Activated CD4-positive, alpha-beta memory T cell treated with anti-CD3 and anti-CD28 coated beads for 36 hours (primary cell): ENCODE measurements at regions of chr6 and their contacts with region 1.

Region 1: GRCh38 chr6:16836144-16836981 is 75.1 kb upstream of the ATXN1 start:
- DNase-seq: peak; percentile 25
- H3K4me3 Mint-ChIP-seq: peak overlapping the region; percentile 66
- H3K27ac Mint-ChIP-seq: peak overlapping the region; percentile 83
- H3K4me1 Mint-ChIP-seq: peaks cover 38% of the 10 kb centered on the region
- H3K27me3 Mint-ChIP-seq: peaks cover 4% of the 10 kb centered on the region

Region 2: DNA sequence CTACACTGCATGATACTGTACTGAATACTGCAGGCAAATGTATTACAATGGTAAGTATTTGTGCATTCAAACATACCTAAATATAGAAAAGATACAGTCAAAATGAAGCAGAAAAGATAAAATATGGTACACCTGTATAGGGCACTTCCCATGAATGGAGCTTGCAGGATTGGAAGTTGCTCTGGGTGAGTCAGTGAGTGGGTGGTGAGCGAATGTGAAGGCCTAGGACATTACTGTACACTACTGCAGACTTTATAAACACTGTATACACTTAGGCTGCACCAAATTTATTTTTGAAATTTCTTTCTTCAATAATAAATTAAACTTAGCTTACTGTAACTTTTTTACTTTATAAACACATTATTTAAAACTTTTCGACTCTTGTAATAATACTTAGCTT is 288.2 kb before region 1 on chr6:
- CTCF ChIA-PET with region 1: no interaction called
- POLR2A ChIA-PET with region 1: no interaction called
- intact Hi-C with region 1: no loop called
- DNase-seq: no peak
- H3K4me3 Mint-ChIP-seq: no peak overlapping the region
- H3K27ac Mint-ChIP-seq: no peak overlapping the region
- H3K4me1 Mint-ChIP-seq: peaks cover 16% of the 10 kb centered on the region
- H3K27me3 Mint-ChIP-seq: no peaks in the 10 kb centered on the region

Region 3: DNA sequence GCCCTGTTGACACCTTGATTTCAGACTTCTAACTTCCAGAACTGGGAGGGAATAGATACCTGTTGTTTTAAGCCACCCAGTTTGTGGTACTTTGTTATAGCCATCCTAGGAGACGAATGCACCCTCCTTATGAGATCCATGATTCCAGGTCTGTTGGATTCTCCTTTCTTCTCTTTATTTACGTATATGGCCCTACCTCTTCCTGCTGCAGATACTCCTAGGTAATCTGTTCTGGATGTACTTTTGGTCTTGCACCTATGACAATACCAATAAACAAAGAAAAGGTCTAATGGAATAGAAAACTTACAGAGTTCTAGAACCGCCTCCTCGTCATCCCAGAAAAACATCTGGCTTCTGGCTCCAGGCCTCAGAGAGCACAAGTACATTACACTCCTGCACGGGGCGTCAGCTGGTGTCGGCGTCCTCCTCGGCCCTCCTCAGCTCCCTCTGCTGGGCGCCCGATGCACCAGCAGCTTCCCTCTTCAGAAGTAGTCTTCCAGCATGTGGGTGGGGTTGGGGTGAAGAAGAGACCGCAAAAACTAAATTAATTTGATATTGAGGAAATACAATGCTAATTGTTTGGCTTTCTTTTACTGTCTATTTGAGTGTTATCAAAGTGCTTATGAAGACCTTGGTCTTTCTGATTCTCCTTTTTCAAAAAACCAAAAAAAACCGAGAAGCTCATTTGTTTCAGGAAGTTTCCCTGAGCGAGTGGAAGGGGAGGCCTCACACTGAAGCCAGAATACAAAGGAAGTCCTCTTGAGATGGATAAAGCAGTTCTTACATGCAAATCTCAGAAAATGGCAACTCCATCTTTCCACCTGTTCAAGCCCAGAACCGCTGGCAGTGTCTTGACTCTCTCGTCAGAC is 65.4 kb before region 1 on chr6:
- CTCF ChIA-PET with region 1: interaction called, 4 read pairs
- POLR2A ChIA-PET with region 1: no interaction called
- intact Hi-C with region 1: loop called (anchors 2 kb)
- DNase-seq: peak; percentile 86
- H3K4me3 Mint-ChIP-seq: peak overlapping the region; percentile 42
- H3K27ac Mint-ChIP-seq: no peak overlapping the region
- H3K4me1 Mint-ChIP-seq: peaks cover 50% of the 10 kb centered on the region
- H3K27me3 Mint-ChIP-seq: no peaks in the 10 kb centered on the region

Region 4: DNA sequence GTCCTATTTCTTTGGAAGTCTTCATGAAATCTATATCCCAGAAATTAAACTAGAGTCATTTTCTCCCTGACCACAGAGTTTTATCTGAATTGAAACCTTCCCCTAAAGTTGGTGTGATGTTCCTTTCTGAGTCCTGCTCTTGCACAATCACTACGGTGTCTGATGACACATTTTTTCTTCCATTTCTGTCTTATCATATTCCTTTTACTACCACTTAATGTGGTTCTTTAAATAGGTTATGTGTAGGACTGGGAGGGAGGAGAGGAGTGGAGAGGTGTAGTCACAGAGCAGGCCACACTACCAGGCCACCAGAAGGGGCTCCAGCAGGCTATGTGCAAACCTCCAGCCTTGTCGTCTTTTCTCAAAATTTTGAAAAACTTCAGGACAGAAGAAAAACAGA is 35.4 kb before region 1 on chr6:
- CTCF ChIA-PET with region 1: no interaction called
- POLR2A ChIA-PET with region 1: no interaction called
- intact Hi-C with region 1: loop called (anchors 2 kb)
- DNase-seq: peak; percentile 34
- H3K4me3 Mint-ChIP-seq: no peak overlapping the region
- H3K27ac Mint-ChIP-seq: no peak overlapping the region
- H3K4me1 Mint-ChIP-seq: peaks cover 23% of the 10 kb centered on the region
- H3K27me3 Mint-ChIP-seq: no peaks in the 10 kb centered on the region

Region 5: DNA sequence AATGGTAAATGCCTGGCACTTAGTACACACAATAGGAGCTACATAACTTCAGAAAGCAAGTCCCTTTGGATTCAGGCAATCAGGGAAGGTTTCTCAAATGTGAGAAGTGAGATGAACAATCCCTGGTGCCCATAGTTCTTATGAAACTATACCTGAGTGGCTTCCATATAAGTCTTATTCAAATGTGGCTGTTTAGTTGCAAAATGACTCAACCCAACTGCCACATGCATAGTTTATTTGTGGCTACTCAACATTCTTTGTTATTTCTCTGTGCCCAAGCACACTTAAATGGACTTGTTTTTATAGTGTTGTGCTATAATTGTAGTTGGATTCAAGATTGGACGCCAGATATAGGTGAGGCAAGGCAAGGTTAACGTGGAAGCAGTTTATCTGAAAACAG is 18.6 kb after region 1 on chr6:
- CTCF ChIA-PET with region 1: interaction called, 4 read pairs
- POLR2A ChIA-PET with region 1: interaction called, 3 read pairs
- intact Hi-C with region 1: loop called (anchors 1 kb)
- DNase-seq: no peak
- H3K4me3 Mint-ChIP-seq: no peak overlapping the region
- H3K27ac Mint-ChIP-seq: no peak overlapping the region
- H3K4me1 Mint-ChIP-seq: peaks cover 10% of the 10 kb centered on the region
- H3K27me3 Mint-ChIP-seq: peaks cover 5% of the 10 kb centered on the region

Region 6: DNA sequence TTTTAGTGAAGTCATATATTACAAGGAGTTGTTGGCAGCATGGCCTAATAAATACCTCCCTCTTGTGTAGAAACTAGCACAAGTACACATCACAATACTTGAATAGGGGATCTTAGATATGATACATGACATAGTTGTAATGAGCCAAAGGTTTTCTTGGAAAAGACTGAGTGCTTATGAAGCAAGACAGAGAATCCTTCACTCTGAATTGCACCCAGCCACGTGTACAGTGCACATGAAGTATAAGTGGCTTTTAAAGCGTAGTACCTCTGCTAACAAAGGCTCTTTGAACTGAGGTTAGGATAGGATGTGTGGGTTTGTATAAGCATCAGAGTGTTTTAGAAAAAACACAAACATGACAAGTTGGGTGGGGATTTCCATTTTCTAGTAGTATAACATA is 120.0 kb after region 1 on chr6:
- CTCF ChIA-PET with region 1: no interaction called
- POLR2A ChIA-PET with region 1: no interaction called
- intact Hi-C with region 1: loop called (anchors 2 kb)
- DNase-seq: peak; percentile 19
- H3K4me3 Mint-ChIP-seq: no peak overlapping the region
- H3K27ac Mint-ChIP-seq: peak overlapping the region; percentile 44
- H3K4me1 Mint-ChIP-seq: peaks cover 32% of the 10 kb centered on the region
- H3K27me3 Mint-ChIP-seq: peaks cover 17% of the 10 kb centered on the region

Region 7: GRCh38 chr6:17015144-17015543 is 178.8 kb after region 1 on chr6:
- CTCF ChIA-PET with region 1: no interaction called
- POLR2A ChIA-PET with region 1: no interaction called
- intact Hi-C with region 1: loop called (anchors 2 kb)
- DNase-seq: peak; percentile 44
- H3K4me3 Mint-ChIP-seq: peak overlapping the region; percentile 54
- H3K27ac Mint-ChIP-seq: no peak overlapping the region
- H3K4me1 Mint-ChIP-seq: peaks cover 18% of the 10 kb centered on the region
- H3K27me3 Mint-ChIP-seq: peaks cover 27% of the 10 kb centered on the region